CD4-positive, alpha-beta T cell (primary cell): ENCODE measurements at regions of chr13 and their contacts with region 1.

Region 1: GRCh38 chr13:30408319-30409101 is 13.8 kb upstream of the UBE2L5 start:
- DNase-seq: peak; percentile 83 to 96 (median 88)
- ATAC-seq: peak; percentile 91
- H3K4me3 ChIP-seq: peak overlapping the region; percentile 37
- H3K4me3 Mint-ChIP-seq: peak overlapping the region; percentile 76
- H3K27ac ChIP-seq: peak overlapping the region in 1 of 2 donors; percentile 76
- H3K27ac Mint-ChIP-seq: peak overlapping the region; percentile 78
- H3K4me1 ChIP-seq: peaks cover 20% of the 10 kb centered on the region
- H3K4me1 Mint-ChIP-seq: peaks cover 40% of the 10 kb centered on the region
- H3K27me3 ChIP-seq: no peaks in the 10 kb centered on the region
- H3K27me3 Mint-ChIP-seq: no peaks in the 10 kb centered on the region
- CTCF ChIP-seq: peak; percentile 63

Region 2: GRCh38 chr13:30422054-30422839 is 13.7 kb after region 1 on chr13 and contains the start of gene UBE2L5:
- CTCF ChIA-PET with region 1: interaction called, 3 read pairs
- POLR2A ChIA-PET with region 1: interaction called, 16 read pairs
- intact Hi-C with region 1: loop called in 1 of 2 experiments (anchors 2 kb)
- DNase-seq: peak in 13 of 14 experiments; percentile 40 to 88 (median 60)
- ATAC-seq: peak; percentile 93
- H3K4me3 ChIP-seq: peak within 1 kb of the TSS; percentile 60
- H3K4me3 Mint-ChIP-seq: peak within 1 kb of the TSS; percentile 91
- H3K27ac ChIP-seq: peak within 1 kb of the TSS in 1 of 2 donors; percentile 46
- H3K27ac Mint-ChIP-seq: peak within 1 kb of the TSS; percentile 83
- H3K4me1 ChIP-seq: peaks cover 12% of the 10 kb centered on the region
- H3K4me1 Mint-ChIP-seq: peaks cover 26% of the 10 kb centered on the region
- H3K27me3 ChIP-seq: no peaks in the 10 kb centered on the region
- H3K27me3 Mint-ChIP-seq: no peaks in the 10 kb centered on the region
- CTCF ChIP-seq: no peak
- total RNA-seq, gene UBE2L5: 0.11 TPM in 1 of 2 experiments, not detected in the other